ENCODE measurements at regions of chr20 and their contacts with region 1.

Region 1: DNA sequence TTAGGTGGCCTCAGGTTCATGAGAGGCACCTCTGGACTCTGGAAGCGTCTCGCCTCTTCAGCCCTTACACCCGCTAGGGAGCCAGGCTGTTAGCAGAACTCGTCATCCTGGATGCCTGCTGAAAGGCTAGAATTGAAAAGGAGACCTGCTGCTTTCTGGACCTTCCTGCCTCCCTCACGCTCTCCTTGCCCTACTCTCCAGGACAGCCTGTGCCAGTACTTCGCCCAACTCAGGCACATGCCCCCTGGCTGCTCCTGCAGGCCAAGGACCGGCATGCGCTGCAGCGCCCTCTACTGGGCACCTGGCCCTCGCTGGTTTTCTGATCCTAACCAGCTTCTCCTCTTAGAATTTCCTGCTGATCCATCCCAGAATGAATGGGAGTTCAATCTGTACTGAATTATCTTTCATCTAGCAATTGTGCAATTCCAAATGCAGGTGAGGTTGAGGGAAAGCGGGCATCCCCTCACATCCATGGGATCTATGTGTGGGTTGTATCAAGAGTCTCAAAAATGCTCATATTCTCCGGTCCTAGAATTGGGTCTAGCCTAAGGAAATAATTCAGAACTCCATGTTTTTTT is 77.9 kb downstream of the PTPN1 start:
- DNase-seq: peak; percentile 92
- H3K27ac ChIP-seq: peak overlapping the region; percentile 97
- CTCF ChIP-seq: peak; percentile 99

Region 2: DNA sequence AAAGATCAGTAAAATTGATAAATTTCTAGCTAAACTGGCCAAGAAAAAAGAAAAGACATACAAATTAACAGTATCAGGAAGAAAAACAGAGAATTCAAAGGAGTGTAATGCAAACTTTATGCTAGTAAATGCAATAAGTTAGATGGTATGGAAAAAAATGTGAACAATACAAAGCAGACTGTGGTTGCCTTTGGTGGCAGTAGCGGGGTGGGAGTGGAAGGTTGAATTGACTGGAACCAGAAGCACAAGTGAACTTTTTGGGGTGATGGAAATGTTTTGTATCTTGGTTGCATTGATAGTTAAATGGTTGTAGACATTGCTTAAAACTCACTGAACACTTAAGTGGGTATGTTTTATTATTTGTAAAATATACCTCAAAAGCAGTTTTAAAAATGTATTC is 32.9 kb before region 1 on chr20:
- CTCF ChIA-PET with region 1: no interaction called
- POLR2A ChIA-PET with region 1: no interaction called
- DNase-seq: no peak
- H3K27ac ChIP-seq: no peak overlapping the region
- CTCF ChIP-seq: no peak

Region 3: DNA sequence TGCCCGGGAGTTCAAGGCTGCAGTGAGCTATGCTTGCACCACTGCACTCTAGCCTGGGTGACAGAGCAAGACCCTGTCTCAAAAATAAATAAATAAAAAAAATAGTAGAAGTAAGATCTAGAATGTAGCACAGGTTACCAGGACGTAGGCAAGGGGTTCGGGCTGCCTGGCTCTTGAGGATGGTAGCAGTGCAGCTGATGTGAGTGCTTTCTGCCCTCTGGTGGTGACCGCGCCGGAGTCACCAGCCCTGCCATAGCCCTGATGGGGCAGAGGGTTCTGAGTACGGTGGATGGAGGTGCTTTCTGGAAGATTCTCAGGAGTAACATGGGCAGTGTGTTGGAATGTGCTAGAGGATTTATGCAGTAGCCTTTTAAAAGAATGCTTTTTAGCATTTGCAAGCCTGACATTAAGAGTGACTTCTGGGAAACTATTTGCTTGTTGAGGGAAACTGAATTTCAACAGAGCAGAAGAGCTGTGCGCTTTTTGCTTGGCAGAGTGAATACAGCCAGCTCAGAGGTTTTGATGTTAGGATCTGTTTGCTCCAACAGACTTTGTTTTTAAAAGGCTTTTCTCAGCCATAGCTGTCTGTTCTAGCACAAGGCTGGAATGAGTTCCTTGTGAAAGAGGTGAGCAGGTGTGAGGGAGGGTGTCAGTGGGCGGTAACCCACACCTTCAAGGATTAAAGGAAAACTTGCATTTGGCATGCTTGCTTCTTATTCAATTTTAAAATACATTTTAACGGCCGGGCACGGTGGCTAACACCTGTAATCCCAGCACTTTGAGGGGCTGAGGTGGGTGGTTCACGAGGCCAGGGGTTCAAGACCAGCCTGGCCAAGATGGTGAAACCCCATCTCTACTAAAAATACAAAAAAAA is 12.0 kb before region 1 on chr20:
- CTCF ChIA-PET with region 1: interaction called, 13 read pairs
- POLR2A ChIA-PET with region 1: no interaction called
- DNase-seq: peak; percentile 73
- H3K27ac ChIP-seq: peak overlapping the region; percentile 86
- CTCF ChIP-seq: peak; percentile 94

Region 4: GRCh38 chr20:50645253-50646118 is 57.4 kb after region 1 on chr20:
- CTCF ChIA-PET with region 1: no interaction called
- POLR2A ChIA-PET with region 1: no interaction called
- DNase-seq: peak; percentile 100
- H3K27ac ChIP-seq: peak overlapping the region; percentile 79
- CTCF ChIP-seq: no peak

Region 5: DNA sequence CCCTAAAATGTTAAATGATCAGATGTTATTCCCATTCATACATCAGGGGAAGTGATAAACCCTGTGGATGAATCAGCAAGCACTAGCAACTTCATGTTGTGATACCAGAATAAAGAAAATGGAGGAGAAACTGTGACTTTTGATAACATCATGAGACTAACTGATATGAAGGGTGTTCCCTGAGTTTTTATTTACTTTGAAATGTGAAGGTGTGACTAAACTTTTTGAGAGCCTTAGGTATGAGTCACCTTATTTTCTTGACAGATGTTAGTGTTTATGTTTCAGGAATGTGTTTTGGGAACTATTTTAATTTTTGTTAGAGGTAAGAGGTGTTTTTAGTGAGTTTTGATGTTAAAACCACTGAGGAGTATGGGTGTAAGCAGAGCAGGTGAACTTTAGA is 147.7 kb after region 1 on chr20:
- CTCF ChIA-PET with region 1: interaction called, 10 read pairs
- POLR2A ChIA-PET with region 1: no interaction called
- DNase-seq: peak; percentile 61
- H3K27ac ChIP-seq: no peak overlapping the region
- CTCF ChIP-seq: no peak

Measured in RWPE1 (cell line).